ENCODE measurements at regions of chr2 and their contacts with region 1.

Region 1: DNA sequence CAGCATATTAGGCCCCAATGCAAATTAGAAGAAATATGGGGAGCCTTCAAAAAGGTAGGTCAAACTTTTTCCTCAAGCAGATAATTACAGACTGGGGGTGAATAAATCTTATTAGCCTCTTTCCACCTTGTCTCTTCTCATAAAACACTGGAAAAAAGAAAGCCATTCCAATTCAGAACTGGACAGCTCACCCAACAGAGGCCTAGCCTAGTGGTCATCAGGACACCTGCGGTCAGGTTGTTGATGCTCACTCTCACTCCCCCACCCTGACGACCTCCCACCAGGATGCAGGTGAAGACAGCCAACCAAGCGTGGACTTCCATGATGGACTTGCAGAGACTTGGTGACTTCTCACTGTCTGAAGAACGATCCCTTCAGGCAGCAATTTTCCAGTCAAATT is 207.1 kb downstream of the ALK start:
- DNase-seq: no peak
- H3K4me3 ChIP-seq: no peak overlapping the region
- H3K27ac ChIP-seq: no peak overlapping the region
- H3K4me1 ChIP-seq: no peaks in the 10 kb centered on the region
- H3K27me3 ChIP-seq: no peaks in the 10 kb centered on the region
- CTCF ChIP-seq: no peak

Region 2: GRCh38 chr2:29066271-29066860 is 648.0 kb before region 1 on chr2:
- CTCF ChIA-PET with region 1: no interaction called
- dilution Hi-C with region 1: no loop called
- in situ Hi-C with region 1: no loop called
- intact Hi-C with region 1: no loop called
- DNase-seq: peak; percentile 68
- H3K4me3 ChIP-seq: no peak overlapping the region
- H3K27ac ChIP-seq: peak overlapping the region; percentile 51
- H3K4me1 ChIP-seq: peaks cover 56% of the 10 kb centered on the region
- H3K27me3 ChIP-seq: no peaks in the 10 kb centered on the region
- CTCF ChIP-seq: no peak

Region 3: DNA sequence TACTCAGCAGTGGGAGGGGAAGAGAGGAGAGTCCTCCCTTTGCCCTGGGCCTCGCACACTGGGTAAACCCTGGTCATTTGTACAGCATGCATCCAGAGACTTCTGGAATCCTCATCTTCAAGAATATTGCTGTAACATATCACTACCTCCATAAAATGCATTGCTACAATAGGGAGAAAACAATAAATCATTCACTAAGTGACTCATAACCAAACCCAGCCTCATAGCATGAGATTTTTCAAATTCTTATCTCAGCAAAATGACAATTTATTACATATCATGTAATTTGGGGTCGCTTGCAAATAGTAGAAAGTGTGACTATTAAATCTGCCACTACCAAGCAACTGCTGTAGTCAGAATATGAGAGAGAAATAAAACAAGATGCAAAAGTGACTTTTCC is 17.6 kb after region 1 on chr2:
- CTCF ChIA-PET with region 1: no interaction called
- dilution Hi-C with region 1: no loop called
- in situ Hi-C with region 1: no loop called
- intact Hi-C with region 1: loop called (anchors 1 kb)
- DNase-seq: no peak
- H3K4me3 ChIP-seq: no peak overlapping the region
- H3K27ac ChIP-seq: no peak overlapping the region
- H3K4me1 ChIP-seq: no peaks in the 10 kb centered on the region
- H3K27me3 ChIP-seq: no peaks in the 10 kb centered on the region
- CTCF ChIP-seq: no peak

Measured in mammary epithelial cell (primary cell).